ENCODE measurements at regions of chr1 and their contacts with region 1.

Region 1: GRCh38 chr1:205919026-205919746 is 24.1 kb downstream of the SLC26A9 start:
- DNase-seq: peak; percentile 89 to 90
- ATAC-seq: peak; percentile 84
- H3K4me3 ChIP-seq: no peak overlapping the region
- H3K27ac ChIP-seq: peak overlapping the region; percentile 14 to 35
- H3K4me1 ChIP-seq: peaks cover 3 to 9% of the 10 kb centered on the region in 2 donors
- H3K27me3 ChIP-seq: no peaks in the 10 kb centered on the region

Region 2: GRCh38 chr1:205791568-205792180 is 127.5 kb before region 1 on chr1:
- intact Hi-C with region 1: loop called in 1 of 2 experiments (anchors 5 kb)
- DNase-seq: peak; percentile 71 to 80
- ATAC-seq: peak; percentile 87
- H3K4me3 ChIP-seq: no peak overlapping the region
- H3K27ac ChIP-seq: no peak overlapping the region
- H3K4me1 ChIP-seq: no peaks in the 10 kb centered on the region
- H3K27me3 ChIP-seq: no peaks in the 10 kb centered on the region

Region 3: GRCh38 chr1:205961405-205961804 is 42.2 kb after region 1 on chr1:
- intact Hi-C with region 1: loop called in 1 of 2 experiments (anchors 5 kb)
- DNase-seq: peak in 1 of 2 donors; percentile 73
- ATAC-seq: no peak
- H3K4me3 ChIP-seq: no peak overlapping the region
- H3K27ac ChIP-seq: no peak overlapping the region
- H3K4me1 ChIP-seq: no peaks in the 10 kb centered on the region
- H3K27me3 ChIP-seq: no peaks in the 10 kb centered on the region

Region 4: DNA sequence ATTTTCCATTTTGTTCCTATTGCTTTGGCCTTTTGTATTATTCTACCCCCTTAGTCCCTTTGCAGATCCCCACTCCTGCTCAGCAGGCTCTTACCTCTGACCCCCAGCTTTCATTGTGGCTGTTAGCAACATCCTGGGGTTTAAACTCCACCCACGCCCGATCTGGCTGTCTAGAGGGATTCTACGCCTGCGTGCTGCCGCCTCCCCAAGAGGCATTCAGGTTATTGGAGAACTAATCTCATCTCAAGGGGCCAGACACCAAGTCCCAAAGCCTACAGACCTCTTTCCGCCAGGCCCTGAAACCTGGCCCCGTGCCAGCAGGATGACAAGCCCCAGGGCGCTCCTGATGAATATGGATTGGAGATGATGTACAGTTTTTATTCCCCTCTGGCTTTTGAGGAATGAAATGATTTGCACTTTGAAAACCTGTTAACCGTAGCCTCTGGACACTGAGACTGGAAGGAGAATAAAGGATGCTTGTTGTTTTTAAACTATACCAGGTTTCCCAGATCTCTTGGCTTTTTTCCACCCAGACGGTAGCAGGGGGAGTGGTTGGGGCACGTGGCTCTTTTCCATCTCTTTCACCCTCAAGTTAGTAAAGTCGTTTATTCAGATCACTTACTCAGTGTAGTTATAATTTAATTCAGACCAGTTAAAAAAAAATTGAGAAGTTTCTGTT is 536.6 kb after region 1 on chr1:
- intact Hi-C with region 1: no loop called
- DNase-seq: no peak
- ATAC-seq: no peak
- H3K4me3 ChIP-seq: no peak overlapping the region
- H3K27ac ChIP-seq: no peak overlapping the region
- H3K4me1 ChIP-seq: peaks cover 0 to 2% of the 10 kb centered on the region in 2 donors
- H3K27me3 ChIP-seq: no peaks in the 10 kb centered on the region